ENCODE measurements at regions of chr5 and their contacts with region 1.

Region 1: DNA sequence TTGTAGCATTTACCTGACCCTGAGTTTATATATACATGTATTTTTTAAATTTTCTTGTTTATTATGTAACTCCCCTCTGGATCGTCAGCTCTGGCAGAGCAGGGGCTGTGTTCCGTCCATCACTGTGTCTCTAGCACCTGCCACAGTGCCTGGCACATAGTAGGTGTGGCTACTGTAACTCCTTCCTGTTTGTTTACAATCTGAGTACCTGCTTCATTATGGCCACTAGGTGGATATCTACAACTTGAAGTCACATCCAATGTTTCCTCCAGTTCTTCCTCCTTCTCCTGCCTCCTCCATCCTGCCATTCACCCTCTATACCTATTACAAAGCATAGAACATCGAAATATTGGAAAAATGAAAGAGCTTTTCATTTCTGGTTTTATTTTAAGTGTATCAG is 14.2 kb upstream of the PPP1R2B start:
- DNase-seq: peak; percentile 18
- H3K4me3 Mint-ChIP-seq: no peak overlapping the region
- H3K27ac Mint-ChIP-seq: no peak overlapping the region
- H3K4me1 Mint-ChIP-seq: peaks cover 7% of the 10 kb centered on the region
- H3K27me3 Mint-ChIP-seq: peaks cover 21% of the 10 kb centered on the region

Region 2: DNA sequence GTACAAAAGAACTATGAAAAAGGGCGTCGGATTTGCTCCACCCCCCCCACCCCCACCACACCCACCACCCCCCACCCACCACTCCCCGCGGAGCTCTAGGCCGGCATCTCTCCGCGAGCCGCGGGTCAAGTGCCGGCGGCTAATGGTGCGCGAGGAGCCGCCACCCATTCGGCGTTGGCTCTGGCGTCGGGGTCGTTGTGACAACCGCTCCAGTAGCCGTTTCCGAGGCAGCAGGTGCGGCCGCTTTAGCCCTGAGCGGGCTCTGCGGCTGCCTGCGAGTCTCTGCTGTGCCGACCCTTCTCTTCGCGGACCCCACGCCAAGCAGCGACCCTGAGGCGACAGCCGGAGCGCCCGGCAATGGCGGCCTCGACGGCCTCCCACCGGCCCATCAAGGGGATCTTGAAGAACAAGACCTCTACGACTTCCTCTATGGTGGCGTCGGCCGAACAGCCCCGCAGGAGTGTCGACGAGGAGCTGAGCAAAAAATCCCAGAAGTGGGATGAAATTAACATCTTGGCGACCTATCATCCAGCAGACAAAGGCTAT is 14.4 kb after region 1 on chr5 and contains the start of gene PPP1R2B:
- CTCF ChIA-PET with region 1: no interaction called
- POLR2A ChIA-PET with region 1: no interaction called
- DNase-seq: no peak
- H3K4me3 Mint-ChIP-seq: no peak within 1 kb of the TSS
- H3K27ac Mint-ChIP-seq: no peak within 1 kb of the TSS
- H3K4me1 Mint-ChIP-seq: no peaks in the 10 kb centered on the region
- H3K27me3 Mint-ChIP-seq: peaks cover 49% of the 10 kb centered on the region
- total RNA-seq, gene PPP1R2B: not detected

Region 3: DNA sequence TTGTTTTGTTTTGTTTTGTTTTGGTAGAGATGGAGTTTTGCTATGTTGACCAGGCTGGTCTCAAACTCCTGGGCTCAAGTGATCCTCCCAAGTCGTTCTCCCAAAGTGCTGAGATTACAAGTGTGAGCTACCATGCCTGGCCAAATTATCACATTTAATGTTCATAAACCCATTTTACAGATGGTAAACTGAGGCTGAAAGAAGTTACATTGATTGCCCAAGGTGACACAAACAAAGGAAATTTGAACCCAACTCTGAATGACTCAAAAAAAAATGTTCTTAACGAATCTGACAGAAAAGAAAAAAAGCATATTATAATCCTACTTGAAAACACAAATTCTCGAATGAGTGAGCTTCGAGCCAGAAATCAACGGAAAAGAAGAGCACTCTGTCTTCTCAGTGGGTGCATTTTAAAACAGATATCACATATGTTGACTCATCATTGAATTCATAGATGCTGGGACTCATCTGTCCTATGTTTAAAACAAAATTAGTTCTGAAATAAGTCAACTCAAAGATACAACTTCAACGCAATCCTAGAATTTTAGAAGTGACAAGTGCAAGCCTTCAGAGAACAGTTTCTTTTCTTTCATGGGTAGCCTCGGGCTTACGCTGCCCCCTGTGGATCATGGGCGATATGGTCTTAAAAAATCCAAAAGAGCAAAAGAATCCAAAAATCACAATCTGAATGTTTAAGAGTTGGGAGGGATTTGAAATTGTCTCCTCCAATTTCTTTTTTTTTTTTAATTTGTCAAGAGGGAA is 98.7 kb after region 1 on chr5:
- CTCF ChIA-PET with region 1: interaction called, 22 read pairs
- POLR2A ChIA-PET with region 1: no interaction called
- DNase-seq: peak; percentile 73
- H3K4me3 Mint-ChIP-seq: peak overlapping the region; percentile 19
- H3K27ac Mint-ChIP-seq: peak overlapping the region; percentile 60
- H3K4me1 Mint-ChIP-seq: peaks cover 37% of the 10 kb centered on the region
- H3K27me3 Mint-ChIP-seq: peaks cover 7% of the 10 kb centered on the region

Region 4: GRCh38 chr5:157130925-157131324 is 295.0 kb after region 1 on chr5:
- CTCF ChIA-PET with region 1: interaction called, 10 read pairs
- POLR2A ChIA-PET with region 1: no interaction called
- DNase-seq: no peak
- H3K4me3 Mint-ChIP-seq: no peak overlapping the region
- H3K27ac Mint-ChIP-seq: no peak overlapping the region
- H3K4me1 Mint-ChIP-seq: peaks cover 26% of the 10 kb centered on the region
- H3K27me3 Mint-ChIP-seq: peaks cover 2% of the 10 kb centered on the region

Measured in activated CD4-positive, alpha-beta memory T cell treated with anti-CD3 and anti-CD28 coated beads, Interleukin-2, amount 10 ng/mL, durations not matched to agents 7 days and 5 days (primary cell).